ENCODE measurements at regions of chr1 and their contacts with region 1.

Region 1: GRCh38 chr1:223771814-223772770 is 59.8 kb downstream of the CAPN2 start:
- DNase-seq: no peak
- CTCF ChIP-seq: no peak

Region 2: DNA sequence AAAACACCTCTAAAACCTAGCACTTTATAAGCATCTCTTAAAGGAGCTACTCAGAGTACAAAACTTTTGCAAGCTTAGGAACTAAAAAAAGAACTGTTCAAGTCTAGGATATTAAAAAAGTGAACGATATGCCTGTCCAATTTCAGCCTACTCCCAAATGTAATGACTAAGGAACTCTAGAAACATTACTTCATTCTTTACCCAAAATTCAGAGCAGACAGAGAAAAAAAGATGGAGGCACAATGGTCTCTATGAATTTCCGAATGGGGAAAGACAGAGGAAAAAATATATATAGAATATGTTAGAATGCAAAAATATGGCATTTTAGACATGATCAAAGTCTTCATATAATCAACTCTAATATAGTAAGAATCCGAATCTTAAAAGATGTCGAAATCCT is 12.4 kb after region 1 on chr1:
- CTCF ChIA-PET with region 1: interaction called, 26 read pairs
- POLR2A ChIA-PET with region 1: no interaction called
- DNase-seq: no peak
- CTCF ChIP-seq: no peak

Region 3: GRCh38 chr1:223852337-223852736 is 80.2 kb after region 1 on chr1:
- CTCF ChIA-PET with region 1: no interaction called
- POLR2A ChIA-PET with region 1: no interaction called
- DNase-seq: no peak
- CTCF ChIP-seq: no peak